ENCODE measurements at regions of chr12 and their contacts with region 1.

Region 1: GRCh38 chr12:11730299-11731041 is 81.0 kb downstream of the ETV6 start:
- DNase-seq: peak; percentile 85
- ATAC-seq: peak; percentile 49
- H3K4me3 ChIP-seq: peak overlapping the region; percentile 18; the same call in 1 of the 2 replicates
- H3K27ac ChIP-seq: peak overlapping the region; percentile 89
- H3K4me1 ChIP-seq: peaks cover 93% of the 10 kb centered on the region
- H3K27me3 ChIP-seq: no peaks in the 10 kb centered on the region
- CTCF ChIP-seq: no peak
- EP300 ChIP-seq: peak in 1 of 2 experiments; percentile 52; a peak in 2 of 4 replicates
- POLR2A ChIP-seq: peak; percentile 62; the same call in 1 of the 2 replicates
- RAD21 ChIP-seq: peak; percentile 34

Region 2: GRCh38 chr12:11553871-11554533 is 176.5 kb before region 1 on chr12:
- CTCF ChIA-PET with region 1: interaction called, 4 read pairs
- POLR2A ChIA-PET with region 1: interaction called, 3 read pairs
- RAD21 ChIA-PET with region 1: interaction called, 16 read pairs
- SMC1A ChIA-PET with region 1: interaction called, 6 read pairs
- in situ Hi-C with region 1: no loop called
- intact Hi-C with region 1: no loop called
- DNase-seq: peak; percentile 88
- ATAC-seq: peak; percentile 87
- H3K4me3 ChIP-seq: no peak overlapping the region
- H3K27ac ChIP-seq: peak overlapping the region; percentile 70
- H3K4me1 ChIP-seq: peaks cover 4% of the 10 kb centered on the region; the same call in 1 of the 2 replicates
- H3K27me3 ChIP-seq: no peaks in the 10 kb centered on the region
- CTCF ChIP-seq: peak; percentile 61 to 77 (median 63)
- EP300 ChIP-seq: peak; percentile 45 to 58; a peak in 2 of 4 replicates
- POLR2A ChIP-seq: no peak
- RAD21 ChIP-seq: peak; percentile 88

Region 3: GRCh38 chr12:11648831-11649702 is 81.4 kb before region 1 on chr12 and contains the start of gene ETV6:
- CTCF ChIA-PET with region 1: interaction called, 3 read pairs
- POLR2A ChIA-PET with region 1: interaction called, 12 read pairs
- RAD21 ChIA-PET with region 1: interaction called, 75 read pairs
- SMC1A ChIA-PET with region 1: interaction called, 76 read pairs
- in situ Hi-C with region 1: loop called (anchors 5 kb)
- intact Hi-C with region 1: loop called (anchors 1 kb)
- DNase-seq: peak; percentile 86
- ATAC-seq: peak; percentile 31
- H3K4me3 ChIP-seq: peak within 1 kb of the TSS; percentile 85
- H3K27ac ChIP-seq: peak within 1 kb of the TSS; percentile 99
- H3K4me1 ChIP-seq: peaks cover 3% of the 10 kb centered on the region; the same call in 1 of the 2 replicates
- H3K27me3 ChIP-seq: no peaks in the 10 kb centered on the region
- CTCF ChIP-seq: no peak
- EP300 ChIP-seq: peak; percentile 33 to 46; a peak in 3 of 4 replicates
- POLR2A ChIP-seq: peak; percentile 80
- RAD21 ChIP-seq: no peak; the same call in 1 of the 2 replicates
- polyA plus RNA-seq, gene ETV6: 6.6 to 10.4 TPM

Region 4: DNA sequence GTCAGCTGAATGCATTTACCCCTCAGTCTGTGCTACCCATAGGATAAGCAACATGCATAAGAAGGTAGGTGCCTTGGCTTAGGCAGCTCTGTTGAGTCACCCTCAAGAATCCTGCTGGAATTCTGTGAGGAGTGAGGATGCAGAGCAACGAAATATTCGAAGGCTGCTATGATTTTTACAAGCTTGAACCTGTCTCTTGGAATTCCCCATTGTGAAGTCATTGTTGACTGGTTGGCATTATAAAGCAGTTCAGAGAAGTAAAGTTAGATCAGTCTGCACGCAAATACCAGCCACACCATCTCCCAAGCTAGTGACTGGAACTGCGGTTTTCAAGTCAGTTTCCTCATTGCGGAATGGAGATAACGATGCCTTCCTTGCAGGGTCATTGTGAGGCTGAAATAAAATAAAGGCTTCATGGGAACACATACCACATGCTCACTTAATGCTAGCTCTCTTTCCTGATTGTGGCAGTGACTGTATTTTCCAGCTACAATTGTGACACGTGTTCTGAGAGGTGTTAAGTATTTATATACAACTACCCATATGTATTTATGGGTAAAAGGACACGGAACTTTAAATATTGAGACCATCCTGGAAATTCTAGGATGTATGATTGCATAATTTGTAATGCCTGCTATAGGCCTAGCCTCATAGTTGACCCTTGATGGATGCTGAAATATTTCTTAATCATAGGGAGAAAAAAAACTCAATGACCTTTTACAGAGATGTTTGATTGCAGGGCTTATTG is 15.7 kb after region 1 on chr12:
- CTCF ChIA-PET with region 1: interaction called, 47 read pairs
- POLR2A ChIA-PET with region 1: interaction called, 44 read pairs
- RAD21 ChIA-PET with region 1: interaction called, 497 read pairs
- SMC1A ChIA-PET with region 1: interaction called, 433 read pairs
- in situ Hi-C with region 1: no loop called
- intact Hi-C with region 1: loop called (anchors 2 kb)
- DNase-seq: peak; percentile 93
- ATAC-seq: peak; percentile 57
- H3K4me3 ChIP-seq: peak overlapping the region; percentile 17; the same call in 1 of the 2 replicates
- H3K27ac ChIP-seq: peak overlapping the region; percentile 100
- H3K4me1 ChIP-seq: peaks cover 88% of the 10 kb centered on the region
- H3K27me3 ChIP-seq: no peaks in the 10 kb centered on the region
- CTCF ChIP-seq: no peak
- EP300 ChIP-seq: peak; percentile 91 to 94
- POLR2A ChIP-seq: peak; percentile 46; the same call in 1 of the 2 replicates
- RAD21 ChIP-seq: peak; percentile 12; the same call in 1 of the 2 replicates

Region 5: GRCh38 chr12:11780521-11781101 is 50.1 kb after region 1 on chr12:
- CTCF ChIA-PET with region 1: interaction called, 7 read pairs
- POLR2A ChIA-PET with region 1: interaction called, 12 read pairs
- RAD21 ChIA-PET with region 1: interaction called, 39 read pairs
- SMC1A ChIA-PET with region 1: interaction called, 33 read pairs
- in situ Hi-C with region 1: no loop called
- intact Hi-C with region 1: loop called (anchors 1 kb)
- DNase-seq: peak; percentile 94
- ATAC-seq: peak; percentile 79
- H3K4me3 ChIP-seq: peak overlapping the region; percentile 13; the same call in 1 of the 2 replicates
- H3K27ac ChIP-seq: peak overlapping the region; percentile 95
- H3K4me1 ChIP-seq: peaks cover 67% of the 10 kb centered on the region
- H3K27me3 ChIP-seq: no peaks in the 10 kb centered on the region
- CTCF ChIP-seq: no peak
- EP300 ChIP-seq: peak; percentile 67 to 91; a peak in 2 of 4 replicates
- POLR2A ChIP-seq: peak; percentile 48; the same call in 1 of the 2 replicates
- RAD21 ChIP-seq: 0 out of 2 replicates have a peak, but pooled peaks have one; percentile 3

Region 6: DNA sequence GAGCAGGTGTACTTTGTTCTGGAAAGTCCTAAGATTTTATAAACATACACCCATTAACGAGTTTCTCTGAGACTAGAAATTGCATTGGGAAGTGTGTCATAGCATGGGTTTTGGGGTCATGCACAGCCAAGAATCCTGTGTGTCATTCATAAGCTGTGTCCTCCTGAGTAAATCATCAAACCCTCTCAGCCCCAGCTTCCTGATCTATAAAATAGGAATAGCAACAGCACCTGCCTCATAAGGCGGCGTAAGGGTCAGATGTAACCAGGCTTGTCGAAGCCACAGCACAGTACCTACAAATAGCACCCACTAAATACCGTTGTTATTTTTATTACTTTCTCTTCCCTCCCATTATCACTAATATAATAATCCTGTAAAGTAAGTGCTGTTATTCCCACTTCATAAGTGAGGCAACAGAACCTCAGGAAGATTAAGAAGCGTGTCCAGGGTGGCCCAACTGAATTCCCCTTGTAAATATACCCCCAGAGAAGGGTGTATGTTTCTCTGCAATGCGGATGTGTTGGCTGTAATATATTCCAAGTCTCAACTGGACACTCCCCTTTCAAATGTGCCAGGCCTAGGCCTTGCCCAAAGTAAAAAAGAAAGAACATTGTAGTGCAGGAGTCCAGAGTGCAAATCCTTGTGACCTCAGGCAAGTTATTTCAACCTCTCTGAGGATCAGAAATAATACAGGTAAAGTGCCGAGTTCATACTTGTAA is 152.0 kb after region 1 on chr12:
- CTCF ChIA-PET with region 1: interaction called, 3 read pairs
- POLR2A ChIA-PET with region 1: no interaction called
- RAD21 ChIA-PET with region 1: interaction called, 3 read pairs
- SMC1A ChIA-PET with region 1: interaction called, 11 read pairs
- in situ Hi-C with region 1: no loop called
- intact Hi-C with region 1: no loop called
- DNase-seq: peak; percentile 39
- ATAC-seq: peak; percentile 82
- H3K4me3 ChIP-seq: no peak overlapping the region
- H3K27ac ChIP-seq: peak overlapping the region; percentile 62
- H3K4me1 ChIP-seq: peaks cover 26% of the 10 kb centered on the region
- H3K27me3 ChIP-seq: no peaks in the 10 kb centered on the region
- CTCF ChIP-seq: no peak
- EP300 ChIP-seq: no peak
- POLR2A ChIP-seq: no peak
- RAD21 ChIP-seq: no peak